ENCODE measurements at regions of chr1 and their contacts with region 1.

Region 1: GRCh38 chr1:167220537-167221125 is at the start of gene POU2F1:
- DNase-seq: peak; percentile 97 to 99 (median 98)
- ATAC-seq: peak; percentile 91
- H3K4me3 ChIP-seq: peak within 1 kb of the TSS; percentile 90
- H3K4me3 Mint-ChIP-seq: peak within 1 kb of the TSS; percentile 87 to 98 (median 96)
- H3K27ac ChIP-seq: peak within 1 kb of the TSS; percentile 83
- H3K27ac Mint-ChIP-seq: peak within 1 kb of the TSS; percentile 92 to 99 (median 98)
- H3K4me1 ChIP-seq: peaks cover 11 to 20% of the 10 kb centered on the region in 2 donors
- H3K4me1 Mint-ChIP-seq: peaks cover 28 to 48% (median 42%) of the 10 kb centered on the region in 7 donors
- H3K27me3 ChIP-seq: no peaks in the 10 kb centered on the region
- H3K27me3 Mint-ChIP-seq: peaks cover 0 to 3% (median 0%) of the 10 kb centered on the region in 5 donors
- total RNA-seq, gene POU2F1: 20.6 to 36.6 (median 23.3) TPM

Region 2: GRCh38 chr1:165768513-165769394 is 1451.9 kb before region 1 on chr1 and contains the start of gene TMCO1:
- CTCF ChIA-PET with region 1: no interaction called
- POLR2A ChIA-PET with region 1: no interaction called
- intact Hi-C with region 1: loop called in 1 of 2 experiments (anchors 5 kb)
- DNase-seq: peak; percentile 76 to 97 (median 94)
- ATAC-seq: peak; percentile 98
- H3K4me3 ChIP-seq: peak within 1 kb of the TSS; percentile 94
- H3K4me3 Mint-ChIP-seq: peak within 1 kb of the TSS; percentile 90 to 100 (median 97)
- H3K27ac ChIP-seq: peak within 1 kb of the TSS; percentile 85
- H3K27ac Mint-ChIP-seq: peak within 1 kb of the TSS; percentile 91 to 100 (median 98)
- H3K4me1 ChIP-seq: peaks cover 19 to 32% of the 10 kb centered on the region in 2 donors
- H3K4me1 Mint-ChIP-seq: peaks cover 44 to 83% (median 68%) of the 10 kb centered on the region in 7 donors
- H3K27me3 ChIP-seq: no peaks in the 10 kb centered on the region
- H3K27me3 Mint-ChIP-seq: no peaks in the 10 kb centered on the region
- total RNA-seq, gene TMCO1: 30.4 to 97.1 (median 49.8) TPM

Region 3: DNA sequence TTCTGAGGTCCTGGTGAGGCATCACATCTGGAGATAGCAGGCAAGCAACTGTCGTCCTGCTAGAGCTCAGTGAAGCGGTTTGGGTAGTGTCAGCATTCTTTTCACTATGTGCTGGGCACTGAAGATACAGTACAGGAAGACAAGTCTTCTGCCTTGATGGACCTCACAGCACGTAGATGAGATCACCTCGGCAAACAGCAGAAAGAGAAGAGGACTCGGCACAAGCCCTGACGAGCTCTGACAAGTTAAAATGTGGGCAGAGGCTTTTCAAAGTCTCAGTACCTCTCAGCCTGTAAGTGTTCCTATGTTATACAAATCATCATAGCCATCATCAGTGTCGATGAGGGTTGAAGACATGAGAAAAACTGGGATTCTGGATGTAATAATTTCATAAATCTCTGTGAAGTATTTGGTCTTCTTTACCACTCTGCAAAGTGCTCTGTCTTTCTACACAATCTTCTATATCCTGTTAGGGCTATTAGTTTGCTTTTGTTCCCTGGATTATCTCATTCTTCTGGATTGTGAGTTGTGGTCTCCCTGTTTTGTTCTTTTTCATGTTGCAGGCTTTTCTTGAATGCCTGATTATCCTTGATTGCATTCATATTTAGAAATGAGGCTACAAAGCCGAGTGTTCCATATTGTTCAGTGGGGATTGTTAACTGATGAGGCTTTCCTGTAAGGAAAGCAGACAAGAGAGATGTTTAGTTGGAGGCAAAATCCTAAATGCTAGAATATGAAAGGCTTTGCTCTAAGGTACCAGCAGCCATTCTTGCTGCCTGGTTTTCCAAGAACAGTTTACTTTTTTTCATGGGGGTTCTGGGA is 207.3 kb before region 1 on chr1:
- CTCF ChIA-PET with region 1: no interaction called
- POLR2A ChIA-PET with region 1: no interaction called
- intact Hi-C with region 1: no loop called
- DNase-seq: no peak
- ATAC-seq: no peak
- H3K4me3 ChIP-seq: no peak overlapping the region
- H3K4me3 Mint-ChIP-seq: no peak overlapping the region
- H3K27ac ChIP-seq: no peak overlapping the region
- H3K27ac Mint-ChIP-seq: no peak overlapping the region
- H3K4me1 ChIP-seq: no peaks in the 10 kb centered on the region
- H3K4me1 Mint-ChIP-seq: peaks cover 0 to 9% (median 5%) of the 10 kb centered on the region in 7 donors
- H3K27me3 ChIP-seq: peaks cover 0 to 6% of the 10 kb centered on the region in 2 donors
- H3K27me3 Mint-ChIP-seq: peaks cover 15 to 46% (median 35%) of the 10 kb centered on the region in 5 donors

Region 4: GRCh38 chr1:167052389-167052788 is 168.2 kb before region 1 on chr1:
- CTCF ChIA-PET with region 1: no interaction called
- POLR2A ChIA-PET with region 1: no interaction called
- intact Hi-C with region 1: no loop called
- DNase-seq: no peak
- ATAC-seq: no peak
- H3K4me3 ChIP-seq: no peak overlapping the region
- H3K4me3 Mint-ChIP-seq: no peak overlapping the region
- H3K27ac ChIP-seq: no peak overlapping the region
- H3K27ac Mint-ChIP-seq: no peak overlapping the region
- H3K4me1 ChIP-seq: no peaks in the 10 kb centered on the region
- H3K4me1 Mint-ChIP-seq: peaks cover 0 to 2% (median 0%) of the 10 kb centered on the region in 7 donors
- H3K27me3 ChIP-seq: no peaks in the 10 kb centered on the region
- H3K27me3 Mint-ChIP-seq: peaks cover 0 to 2% (median 0%) of the 10 kb centered on the region in 5 donors

Region 5: DNA sequence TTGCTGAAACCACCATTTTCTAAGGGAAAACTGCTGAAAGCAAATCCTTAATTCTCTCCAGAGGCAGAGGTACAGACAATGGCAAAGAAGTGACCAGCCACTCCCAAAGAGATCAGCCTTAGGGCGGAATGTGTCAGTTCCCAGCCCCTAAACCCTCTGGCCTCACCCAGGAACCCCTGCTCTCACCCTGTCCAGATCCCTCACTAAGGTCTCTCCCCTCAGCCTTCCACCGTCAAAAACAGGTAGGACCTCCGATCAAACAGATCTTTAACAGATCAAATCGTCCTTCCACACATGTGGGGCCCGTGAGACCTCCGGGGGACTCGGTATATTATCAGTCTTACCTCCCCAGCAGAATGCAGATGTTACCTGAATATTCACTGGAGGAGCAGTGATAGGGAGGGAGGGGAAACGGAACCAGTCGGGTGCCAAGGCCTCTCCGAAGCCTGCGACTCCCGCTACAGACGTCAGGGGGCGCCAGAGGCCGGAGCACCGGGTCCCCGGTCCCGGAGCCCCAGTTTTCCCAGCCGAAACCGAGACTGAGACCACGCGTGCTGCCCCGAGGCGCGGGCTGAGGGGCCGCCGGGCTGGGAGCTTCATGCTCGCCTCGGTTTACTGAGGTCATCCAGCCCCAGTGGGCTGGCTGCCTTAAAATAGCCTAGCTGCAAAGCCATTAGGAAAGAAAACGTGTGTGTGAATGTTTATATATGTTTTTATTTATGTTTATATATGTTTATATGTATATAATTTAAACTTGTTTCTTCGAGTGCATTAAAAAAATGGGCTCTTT is 154.1 kb before region 1 on chr1:
- CTCF ChIA-PET with region 1: interaction called, 8 read pairs
- POLR2A ChIA-PET with region 1: no interaction called
- intact Hi-C with region 1: loop called (anchors 1 to 2 kb)
- DNase-seq: peak; percentile 59 to 90 (median 78)
- ATAC-seq: peak; percentile 95
- H3K4me3 ChIP-seq: no peak overlapping the region
- H3K4me3 Mint-ChIP-seq: peak overlapping the region in 4 of 10 donors; percentile 15 to 54 (median 37)
- H3K27ac ChIP-seq: no peak overlapping the region
- H3K27ac Mint-ChIP-seq: peak overlapping the region in 1 of 9 donors; percentile 58
- H3K4me1 ChIP-seq: no peaks in the 10 kb centered on the region
- H3K4me1 Mint-ChIP-seq: peaks cover 0 to 9% (median 5%) of the 10 kb centered on the region in 7 donors
- H3K27me3 ChIP-seq: no peaks in the 10 kb centered on the region
- H3K27me3 Mint-ChIP-seq: no peaks in the 10 kb centered on the region

Region 6: GRCh38 chr1:167301355-167301754 is 80.7 kb after region 1 on chr1:
- CTCF ChIA-PET with region 1: no interaction called
- POLR2A ChIA-PET with region 1: no interaction called
- intact Hi-C with region 1: no loop called
- DNase-seq: no peak
- ATAC-seq: no peak
- H3K4me3 ChIP-seq: no peak overlapping the region
- H3K4me3 Mint-ChIP-seq: no peak overlapping the region
- H3K27ac ChIP-seq: no peak overlapping the region
- H3K27ac Mint-ChIP-seq: no peak overlapping the region
- H3K4me1 ChIP-seq: no peaks in the 10 kb centered on the region
- H3K4me1 Mint-ChIP-seq: peaks cover 2 to 47% (median 25%) of the 10 kb centered on the region in 7 donors
- H3K27me3 ChIP-seq: no peaks in the 10 kb centered on the region
- H3K27me3 Mint-ChIP-seq: no peaks in the 10 kb centered on the region

Region 7: GRCh38 chr1:167342846-167343245 is 122.2 kb after region 1 on chr1:
- CTCF ChIA-PET with region 1: no interaction called
- POLR2A ChIA-PET with region 1: no interaction called
- intact Hi-C with region 1: loop called in 1 of 2 experiments (anchors 2 kb)
- DNase-seq: peak in 4 of 9 donors; percentile 9 to 27 (median 16)
- ATAC-seq: peak; percentile 52
- H3K4me3 ChIP-seq: no peak overlapping the region
- H3K4me3 Mint-ChIP-seq: no peak overlapping the region
- H3K27ac ChIP-seq: no peak overlapping the region
- H3K27ac Mint-ChIP-seq: peak overlapping the region in 1 of 9 donors; percentile 5
- H3K4me1 ChIP-seq: no peaks in the 10 kb centered on the region
- H3K4me1 Mint-ChIP-seq: peaks cover 4 to 14% (median 9%) of the 10 kb centered on the region in 7 donors
- H3K27me3 ChIP-seq: no peaks in the 10 kb centered on the region
- H3K27me3 Mint-ChIP-seq: no peaks in the 10 kb centered on the region

Region 8: GRCh38 chr1:167533851-167534300 is 313.2 kb after region 1 on chr1:
- CTCF ChIA-PET with region 1: interaction called, 6 read pairs
- POLR2A ChIA-PET with region 1: no interaction called
- intact Hi-C with region 1: loop called in 1 of 2 experiments (anchors 5 kb)
- DNase-seq: peak in 8 of 9 donors; percentile 50 to 72 (median 58)
- ATAC-seq: peak; percentile 87
- H3K4me3 ChIP-seq: no peak overlapping the region
- H3K4me3 Mint-ChIP-seq: no peak overlapping the region
- H3K27ac ChIP-seq: no peak overlapping the region
- H3K27ac Mint-ChIP-seq: peak overlapping the region in 1 of 9 donors; percentile 30
- H3K4me1 ChIP-seq: no peaks in the 10 kb centered on the region
- H3K4me1 Mint-ChIP-seq: peaks cover 0 to 11% (median 2%) of the 10 kb centered on the region in 7 donors
- H3K27me3 ChIP-seq: no peaks in the 10 kb centered on the region
- H3K27me3 Mint-ChIP-seq: peaks cover 0 to 3% (median 0%) of the 10 kb centered on the region in 5 donors

Region 9: GRCh38 chr1:167683641-167684502 is 463.2 kb after region 1 on chr1:
- CTCF ChIA-PET with region 1: no interaction called
- POLR2A ChIA-PET with region 1: no interaction called
- intact Hi-C with region 1: no loop called
- DNase-seq: no peak
- ATAC-seq: no peak
- H3K4me3 ChIP-seq: no peak overlapping the region
- H3K4me3 Mint-ChIP-seq: no peak overlapping the region
- H3K27ac ChIP-seq: peak overlapping the region; percentile 23
- H3K27ac Mint-ChIP-seq: peak overlapping the region in 8 of 9 donors; percentile 4 to 80 (median 64)
- H3K4me1 ChIP-seq: peaks cover 0 to 5% of the 10 kb centered on the region in 2 donors
- H3K4me1 Mint-ChIP-seq: peaks cover 11 to 30% (median 22%) of the 10 kb centered on the region in 7 donors
- H3K27me3 ChIP-seq: no peaks in the 10 kb centered on the region
- H3K27me3 Mint-ChIP-seq: no peaks in the 10 kb centered on the region

Region 10: DNA sequence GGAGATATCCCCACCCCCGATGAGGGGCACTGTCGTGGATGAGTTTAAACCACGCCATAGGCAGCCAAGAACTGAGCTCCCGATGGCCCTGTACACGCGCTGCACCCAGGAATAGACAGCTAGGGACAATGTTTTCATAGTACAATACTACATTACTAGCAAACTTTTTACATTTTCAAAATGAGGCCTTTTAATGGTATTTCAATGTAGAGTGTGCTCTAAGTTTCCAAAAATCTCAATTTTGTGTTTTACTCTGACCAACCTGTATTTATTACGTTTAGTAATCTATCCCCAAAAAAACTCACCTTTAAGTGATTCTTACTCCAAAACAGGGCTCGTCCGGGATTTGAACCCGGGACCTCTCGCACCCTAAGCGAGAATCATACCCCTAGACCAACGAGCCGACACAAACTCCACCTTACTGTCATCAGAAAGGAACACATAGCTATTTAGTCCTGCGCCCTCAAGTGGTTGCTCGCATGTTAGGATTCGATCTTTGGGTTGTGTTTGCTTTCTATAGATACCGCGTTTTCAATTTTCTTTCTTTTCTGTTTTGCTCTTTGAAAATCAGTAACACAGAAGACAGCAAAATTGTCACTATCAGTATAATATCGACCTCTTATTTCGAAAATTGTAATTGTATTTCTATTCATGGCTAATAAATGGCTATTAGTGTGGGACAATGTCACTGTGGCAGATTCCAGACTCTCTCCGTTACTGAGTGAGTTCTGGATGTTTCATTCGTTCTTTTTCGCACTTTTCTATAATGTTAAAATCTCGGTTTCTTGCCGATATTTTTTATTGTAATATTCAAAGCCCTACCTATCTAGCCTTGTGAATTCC is 494.7 kb after region 1 on chr1:
- CTCF ChIA-PET with region 1: no interaction called
- POLR2A ChIA-PET with region 1: interaction called, 3 read pairs
- intact Hi-C with region 1: loop called (anchors 1 kb)
- DNase-seq: peak; percentile 66 to 91 (median 89)
- ATAC-seq: peak; percentile 81
- H3K4me3 ChIP-seq: peak overlapping the region; percentile 88
- H3K4me3 Mint-ChIP-seq: peak overlapping the region; percentile 89 to 98 (median 93)
- H3K27ac ChIP-seq: peak overlapping the region; percentile 48
- H3K27ac Mint-ChIP-seq: peak overlapping the region; percentile 87 to 100 (median 98)
- H3K4me1 ChIP-seq: peaks cover 4 to 13% of the 10 kb centered on the region in 2 donors
- H3K4me1 Mint-ChIP-seq: peaks cover 26 to 53% (median 45%) of the 10 kb centered on the region in 7 donors
- H3K27me3 ChIP-seq: no peaks in the 10 kb centered on the region
- H3K27me3 Mint-ChIP-seq: peaks cover 0 to 16% (median 0%) of the 10 kb centered on the region in 5 donors

Region 11: DNA sequence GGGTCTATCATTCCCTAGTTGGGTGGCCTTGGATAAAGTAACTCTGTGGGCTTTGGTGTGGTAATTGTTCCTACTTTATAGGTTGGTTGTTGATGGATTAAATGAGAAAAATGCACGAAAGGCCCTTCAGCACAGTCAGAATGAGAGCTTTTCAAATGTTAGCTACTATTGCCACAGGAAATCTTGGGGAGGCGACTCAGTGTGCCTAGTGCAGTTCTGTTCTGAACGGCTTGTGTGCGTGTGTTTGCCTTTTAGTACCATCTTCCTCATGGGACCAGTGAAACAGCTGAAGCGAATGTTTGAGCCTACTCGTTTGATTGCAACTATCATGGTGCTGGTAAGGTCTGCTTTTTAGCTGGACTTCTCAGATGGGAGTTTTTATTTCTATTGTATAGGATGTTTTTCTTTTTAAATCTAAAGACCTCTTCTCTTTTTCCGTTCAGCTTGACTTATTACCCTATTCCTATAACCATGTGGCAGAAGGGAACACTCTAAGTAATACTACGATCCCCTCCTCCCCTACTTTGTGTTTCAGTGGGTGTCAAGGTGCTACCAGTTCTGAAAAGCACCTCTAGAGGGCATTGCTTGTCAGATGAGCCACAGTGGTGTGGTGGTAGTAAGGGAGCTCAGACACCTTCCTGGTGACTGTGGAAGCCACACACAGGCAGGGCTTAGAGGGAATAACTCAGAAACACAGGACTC is 1014.4 kb after region 1 on chr1:
- CTCF ChIA-PET with region 1: no interaction called
- POLR2A ChIA-PET with region 1: no interaction called
- intact Hi-C with region 1: loop called in 1 of 2 experiments (anchors 5 kb)
- DNase-seq: peak in 7 of 9 donors; percentile 17 to 38 (median 27)
- ATAC-seq: peak; percentile 95
- H3K4me3 ChIP-seq: no peak overlapping the region
- H3K4me3 Mint-ChIP-seq: peak overlapping the region in 1 of 10 donors; percentile 26
- H3K27ac ChIP-seq: no peak overlapping the region
- H3K27ac Mint-ChIP-seq: peak overlapping the region in 4 of 9 donors; percentile 1 to 68 (median 34)
- H3K4me1 ChIP-seq: peaks cover 9 to 11% of the 10 kb centered on the region in 2 donors
- H3K4me1 Mint-ChIP-seq: peaks cover 33 to 71% (median 61%) of the 10 kb centered on the region in 7 donors
- H3K27me3 ChIP-seq: no peaks in the 10 kb centered on the region
- H3K27me3 Mint-ChIP-seq: no peaks in the 10 kb centered on the region

Measured in naive thymus-derived CD4-positive, alpha-beta T cell (primary cell).